CD8-positive, alpha-beta memory T cell (primary cell): ENCODE measurements at regions of chr17 and their contacts with region 1.

Region 1: DNA sequence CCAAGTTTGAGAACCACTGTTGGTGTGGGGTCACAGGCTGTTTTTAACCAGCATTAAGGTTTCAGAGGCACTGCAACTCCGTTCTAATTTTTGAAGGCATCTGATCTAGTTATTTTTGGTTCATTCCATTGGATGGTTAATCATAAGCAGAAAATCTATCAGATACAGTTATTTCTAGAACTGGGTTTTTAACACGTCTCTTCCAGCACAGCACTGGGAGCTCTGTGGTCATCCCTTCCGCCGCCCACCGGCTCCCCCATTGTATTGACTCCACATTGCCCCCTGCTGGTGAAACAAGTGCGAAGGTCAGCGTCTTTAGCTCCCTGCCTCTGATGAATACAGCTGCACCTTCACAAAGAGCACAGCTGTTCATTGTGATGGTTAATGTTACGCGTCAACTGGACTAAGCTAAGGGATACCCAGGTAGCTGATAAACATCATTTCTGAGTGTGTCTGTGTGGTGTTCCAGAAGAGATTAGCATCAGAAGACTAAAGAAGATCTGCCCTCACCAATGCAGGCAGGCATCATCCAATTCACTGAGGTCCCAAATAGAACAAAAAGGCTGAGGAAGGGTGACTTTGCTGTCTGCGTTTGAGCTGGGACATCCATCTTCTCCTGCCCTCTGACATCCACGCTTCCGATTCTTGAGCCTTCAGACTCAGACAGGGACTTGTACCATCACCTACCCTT is 8.5 kb downstream of the CCL18 start:
- DNase-seq: peak; percentile 27 to 77 (median 59)
- H3K4me3 ChIP-seq: no peak overlapping the region
- H3K4me3 Mint-ChIP-seq: peak overlapping the region in 6 of 7 donors; percentile 18 to 63 (median 34)
- H3K27ac ChIP-seq: no peak overlapping the region
- H3K27ac Mint-ChIP-seq: peak overlapping the region in 6 of 8 donors; percentile 0 to 89 (median 48)
- H3K4me1 ChIP-seq: peaks cover 29% of the 10 kb centered on the region
- H3K4me1 Mint-ChIP-seq: peaks cover 38 to 58% (median 55%) of the 10 kb centered on the region in 3 donors
- H3K27me3 ChIP-seq: no peaks in the 10 kb centered on the region
- H3K27me3 Mint-ChIP-seq: no peaks in the 10 kb centered on the region

Region 2: GRCh38 chr17:36085765-36086164 is 13.2 kb after region 1 on chr17:
- CTCF ChIA-PET with region 1: interaction called, 15 read pairs
- POLR2A ChIA-PET with region 1: interaction called, 3 read pairs
- DNase-seq: no peak
- H3K4me3 ChIP-seq: no peak overlapping the region
- H3K4me3 Mint-ChIP-seq: peak overlapping the region; percentile 2 to 88 (median 24)
- H3K27ac ChIP-seq: no peak overlapping the region
- H3K27ac Mint-ChIP-seq: peak overlapping the region; percentile 70 to 95 (median 84)
- H3K4me1 ChIP-seq: peaks cover 46% of the 10 kb centered on the region
- H3K4me1 Mint-ChIP-seq: peaks cover 77 to 93% (median 80%) of the 10 kb centered on the region in 3 donors
- H3K27me3 ChIP-seq: no peaks in the 10 kb centered on the region
- H3K27me3 Mint-ChIP-seq: no peaks in the 10 kb centered on the region

Region 3: DNA sequence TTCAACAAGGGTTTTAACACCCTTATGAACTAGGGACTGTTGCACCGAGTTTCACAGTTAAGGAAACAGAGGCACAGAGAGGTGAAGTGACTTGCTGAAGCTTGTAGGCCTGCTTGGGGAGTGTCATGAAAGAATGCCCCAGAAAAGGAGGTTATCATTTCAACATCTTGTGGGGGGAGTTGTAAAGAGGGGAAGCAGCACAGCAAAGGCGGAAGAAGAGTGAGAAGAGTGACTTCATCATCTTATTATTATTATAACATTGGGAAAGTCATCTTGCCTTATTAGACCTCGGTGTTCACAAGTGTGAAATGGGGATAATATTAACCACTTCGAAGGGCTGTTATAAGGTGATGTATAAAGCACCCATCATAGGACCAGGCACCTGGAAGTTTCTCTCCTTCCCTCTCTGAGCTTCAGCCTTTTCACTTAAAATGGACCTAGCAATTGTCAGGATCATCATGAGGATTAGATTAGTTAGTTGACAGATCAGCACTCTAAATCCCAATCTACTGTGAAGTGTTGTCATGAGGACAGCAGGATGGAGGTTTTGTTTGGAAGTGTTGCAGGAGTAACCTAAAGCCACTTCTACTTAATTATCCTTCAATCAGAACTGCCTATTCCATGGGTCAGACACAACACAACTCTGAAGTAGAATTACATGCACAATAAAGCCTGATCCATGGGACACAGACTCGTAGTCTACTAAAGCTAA is 33.4 kb after region 1 on chr17:
- CTCF ChIA-PET with region 1: interaction called, 11 read pairs
- POLR2A ChIA-PET with region 1: no interaction called
- DNase-seq: no peak
- H3K4me3 ChIP-seq: no peak overlapping the region
- H3K4me3 Mint-ChIP-seq: peak overlapping the region; percentile 91 to 98 (median 97)
- H3K27ac ChIP-seq: no peak overlapping the region
- H3K27ac Mint-ChIP-seq: peak overlapping the region; percentile 93 to 99 (median 98)
- H3K4me1 ChIP-seq: peaks cover 48% of the 10 kb centered on the region
- H3K4me1 Mint-ChIP-seq: peaks cover 61 to 70% (median 68%) of the 10 kb centered on the region in 3 donors
- H3K27me3 ChIP-seq: no peaks in the 10 kb centered on the region
- H3K27me3 Mint-ChIP-seq: no peaks in the 10 kb centered on the region

Region 4: GRCh38 chr17:36148559-36149295 is 76.2 kb after region 1 on chr17:
- CTCF ChIA-PET with region 1: interaction called, 25 read pairs
- POLR2A ChIA-PET with region 1: no interaction called
- DNase-seq: peak; percentile 49 to 80 (median 67)
- H3K4me3 ChIP-seq: no peak overlapping the region
- H3K4me3 Mint-ChIP-seq: peak overlapping the region in 6 of 7 donors; percentile 22 to 84 (median 67)
- H3K27ac ChIP-seq: no peak overlapping the region
- H3K27ac Mint-ChIP-seq: peak overlapping the region in 5 of 8 donors; percentile 21 to 79 (median 55)
- H3K4me1 ChIP-seq: no peaks in the 10 kb centered on the region
- H3K4me1 Mint-ChIP-seq: peaks cover 4 to 43% (median 39%) of the 10 kb centered on the region in 3 donors
- H3K27me3 ChIP-seq: no peaks in the 10 kb centered on the region
- H3K27me3 Mint-ChIP-seq: peaks cover 5 to 9% of the 10 kb centered on the region in 2 donors